Endothelial cell of umbilical vein (primary cell): ENCODE measurements at regions of chr1 and their contacts with region 1.

Region 1: DNA sequence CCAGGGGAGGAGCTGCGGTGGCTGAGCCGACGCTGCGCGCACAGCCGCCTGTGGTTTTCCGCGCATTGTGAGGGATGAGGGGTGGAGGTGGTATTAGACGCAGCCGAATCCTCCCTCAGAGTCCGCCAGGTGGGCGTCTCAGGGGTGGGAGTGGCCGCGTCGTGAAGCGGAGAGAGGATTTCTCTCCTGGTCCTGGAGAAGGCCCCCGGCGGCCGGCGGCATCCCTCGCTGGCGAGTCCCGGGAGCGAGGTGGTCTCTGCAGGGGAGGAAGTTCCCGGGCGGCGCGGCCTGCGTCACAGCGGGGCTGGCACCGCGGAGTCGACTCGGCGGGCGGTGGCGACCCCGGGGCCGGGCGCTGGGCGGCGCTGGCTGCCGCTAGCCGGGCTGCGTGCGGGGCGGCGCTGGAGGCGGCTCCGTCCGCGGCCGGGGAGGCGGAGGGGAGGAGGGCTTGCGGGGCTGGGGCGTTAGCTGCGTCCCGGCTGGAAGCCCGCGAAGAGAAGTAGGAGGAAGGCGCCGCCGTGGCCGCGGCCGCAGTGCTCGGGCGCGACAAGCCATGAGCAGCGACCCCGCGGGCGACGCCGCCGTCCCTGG is at the start of gene LRRC8C:
- DNase-seq: peak; percentile 84
- H3K4me3 ChIP-seq: peak within 1 kb of the TSS; percentile 72 to 100 (median 99)
- H3K27ac ChIP-seq: peak within 1 kb of the TSS; percentile 97
- H3K4me1 ChIP-seq: peaks cover 32% of the 10 kb centered on the region
- H3K27me3 ChIP-seq: no peaks in the 10 kb centered on the region
- CTCF ChIP-seq: peak; percentile 18 to 69
- POLR2A ChIP-seq: peak; percentile 73
- total RNA-seq, gene LRRC8C: 40.6 and 51.5 TPM in 2 replicates

Region 2: DNA sequence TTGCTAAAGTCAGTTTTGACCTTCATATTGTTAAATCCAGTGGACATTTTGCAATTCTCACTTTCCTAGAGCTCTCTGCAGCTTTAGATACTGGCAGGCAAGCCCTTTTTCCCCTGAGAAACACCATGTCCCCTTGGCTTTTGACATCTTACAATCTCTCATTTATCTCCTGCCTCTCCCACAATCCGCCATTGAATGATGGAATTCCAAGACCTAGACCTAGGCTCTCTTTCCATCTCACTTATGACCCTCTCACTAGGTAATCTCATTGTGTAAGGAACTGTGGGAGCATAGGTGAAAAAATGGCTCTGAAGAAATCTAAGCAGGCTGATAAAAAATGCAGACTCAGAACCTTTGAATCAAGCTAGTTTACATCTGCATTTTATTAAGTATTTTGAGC is 642.3 kb before region 1 on chr1:
- CTCF ChIA-PET with region 1: no interaction called
- POLR2A ChIA-PET with region 1: no interaction called
- dilution Hi-C with region 1: no loop called
- intact Hi-C with region 1: loop called (anchors 1 kb)
- DNase-seq: no peak
- H3K4me3 ChIP-seq: no peak overlapping the region
- H3K27ac ChIP-seq: no peak overlapping the region
- H3K4me1 ChIP-seq: peaks cover 15% of the 10 kb centered on the region
- H3K27me3 ChIP-seq: no peaks in the 10 kb centered on the region
- CTCF ChIP-seq: no peak
- POLR2A ChIP-seq: no peak

Region 3: GRCh38 chr1:89692601-89693521 is 60.1 kb after region 1 on chr1:
- CTCF ChIA-PET with region 1: interaction called, 6 read pairs
- POLR2A ChIA-PET with region 1: no interaction called
- dilution Hi-C with region 1: no loop called
- intact Hi-C with region 1: loop called (anchors 1 kb)
- DNase-seq: peak; percentile 96
- H3K4me3 ChIP-seq: no peak overlapping the region
- H3K27ac ChIP-seq: peak overlapping the region; percentile 86
- H3K4me1 ChIP-seq: peaks cover 57% of the 10 kb centered on the region
- H3K27me3 ChIP-seq: no peaks in the 10 kb centered on the region
- CTCF ChIP-seq: no peak
- POLR2A ChIP-seq: peak; percentile 76

Region 4: GRCh38 chr1:89719502-89720306 is 87.0 kb after region 1 on chr1:
- CTCF ChIA-PET with region 1: interaction called, 24 read pairs
- POLR2A ChIA-PET with region 1: interaction called, 4 read pairs
- dilution Hi-C with region 1: no loop called
- intact Hi-C with region 1: loop called (anchors 1 kb)
- DNase-seq: peak; percentile 89
- H3K4me3 ChIP-seq: peak overlapping the region in 2 of 3 experiments; percentile 16 to 52
- H3K27ac ChIP-seq: peak overlapping the region; percentile 76
- H3K4me1 ChIP-seq: peaks cover 75% of the 10 kb centered on the region
- H3K27me3 ChIP-seq: no peaks in the 10 kb centered on the region
- CTCF ChIP-seq: no peak
- POLR2A ChIP-seq: no peak

Region 5: GRCh38 chr1:89884718-89885596 is 252.2 kb after region 1 on chr1:
- CTCF ChIA-PET with region 1: no interaction called
- POLR2A ChIA-PET with region 1: no interaction called
- dilution Hi-C with region 1: no loop called
- intact Hi-C with region 1: loop called (anchors 5 kb)
- DNase-seq: peak; percentile 87
- H3K4me3 ChIP-seq: peak overlapping the region in 1 of 3 experiments; percentile 23
- H3K27ac ChIP-seq: peak overlapping the region; percentile 80
- H3K4me1 ChIP-seq: peaks cover 48% of the 10 kb centered on the region
- H3K27me3 ChIP-seq: no peaks in the 10 kb centered on the region
- CTCF ChIP-seq: no peak
- POLR2A ChIP-seq: no peak